ENCODE measurements at regions of chr16 and their contacts with region 1.

Region 1: DNA sequence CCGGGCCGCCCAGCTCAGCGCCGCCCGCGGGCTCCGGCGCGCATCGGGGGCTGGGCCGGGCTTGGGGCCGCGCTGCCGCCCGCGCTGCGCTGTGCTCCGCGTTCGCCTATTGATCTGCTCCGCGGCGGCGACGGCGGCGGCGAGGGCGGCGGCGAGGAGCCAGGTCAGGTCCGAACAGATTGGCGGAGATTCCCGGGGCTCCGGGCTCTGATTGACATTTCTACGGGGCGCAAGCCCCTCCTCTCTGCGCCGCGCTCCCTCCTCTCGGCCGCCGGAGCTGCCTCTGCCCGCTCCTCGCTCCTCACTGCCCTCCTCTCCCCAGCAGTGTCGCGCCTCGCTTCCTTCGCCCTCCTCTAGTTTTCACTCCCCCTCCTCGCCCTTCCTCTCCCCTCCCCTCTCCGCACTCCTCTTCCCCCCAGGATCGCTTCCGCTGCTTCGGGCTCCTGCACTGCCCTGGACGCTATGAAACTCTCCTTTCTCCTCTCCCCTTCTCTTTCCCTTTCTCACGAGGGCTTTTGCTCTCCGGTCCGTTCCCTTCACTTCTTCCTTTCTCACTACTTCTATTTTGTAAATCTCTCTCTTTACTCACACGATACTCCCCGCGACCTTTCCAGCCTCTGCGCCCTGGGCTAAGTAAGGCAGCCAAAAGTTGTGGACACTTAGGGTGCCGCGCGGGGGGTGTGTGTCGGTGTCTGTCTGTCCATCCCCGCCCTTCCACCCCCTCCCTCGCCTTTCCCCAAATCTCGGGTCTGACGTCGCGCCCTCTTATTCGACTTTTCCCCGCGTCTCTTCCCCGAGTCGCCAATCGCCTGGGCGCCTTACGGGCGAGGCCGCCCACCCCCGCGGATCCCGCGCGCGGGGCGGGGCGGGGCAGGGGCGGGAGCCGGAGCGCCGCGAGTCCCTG is at the start of gene IRX3:
- DNase-seq: no peak
- H3K4me3 Mint-ChIP-seq: peak within 1 kb of the TSS; percentile 75
- H3K27ac Mint-ChIP-seq: peak within 1 kb of the TSS; percentile 48
- H3K4me1 Mint-ChIP-seq: peaks cover 25% of the 10 kb centered on the region
- H3K27me3 Mint-ChIP-seq: peaks cover 67% of the 10 kb centered on the region
- total RNA-seq, gene IRX3: 0.74 and 0.96 TPM in 2 replicates

Region 2: GRCh38 chr16:52547004-52547833 is 1739.1 kb before region 1 on chr16 and contains the start of gene TOX3:
- intact Hi-C with region 1: loop called (anchors 10 kb)
- DNase-seq: no peak
- H3K4me3 Mint-ChIP-seq: no peak within 1 kb of the TSS
- H3K27ac Mint-ChIP-seq: no peak within 1 kb of the TSS
- H3K4me1 Mint-ChIP-seq: no peaks in the 10 kb centered on the region
- H3K27me3 Mint-ChIP-seq: peaks cover 31% of the 10 kb centered on the region
- total RNA-seq, gene TOX3: not detected in 2 replicates

Region 3: DNA sequence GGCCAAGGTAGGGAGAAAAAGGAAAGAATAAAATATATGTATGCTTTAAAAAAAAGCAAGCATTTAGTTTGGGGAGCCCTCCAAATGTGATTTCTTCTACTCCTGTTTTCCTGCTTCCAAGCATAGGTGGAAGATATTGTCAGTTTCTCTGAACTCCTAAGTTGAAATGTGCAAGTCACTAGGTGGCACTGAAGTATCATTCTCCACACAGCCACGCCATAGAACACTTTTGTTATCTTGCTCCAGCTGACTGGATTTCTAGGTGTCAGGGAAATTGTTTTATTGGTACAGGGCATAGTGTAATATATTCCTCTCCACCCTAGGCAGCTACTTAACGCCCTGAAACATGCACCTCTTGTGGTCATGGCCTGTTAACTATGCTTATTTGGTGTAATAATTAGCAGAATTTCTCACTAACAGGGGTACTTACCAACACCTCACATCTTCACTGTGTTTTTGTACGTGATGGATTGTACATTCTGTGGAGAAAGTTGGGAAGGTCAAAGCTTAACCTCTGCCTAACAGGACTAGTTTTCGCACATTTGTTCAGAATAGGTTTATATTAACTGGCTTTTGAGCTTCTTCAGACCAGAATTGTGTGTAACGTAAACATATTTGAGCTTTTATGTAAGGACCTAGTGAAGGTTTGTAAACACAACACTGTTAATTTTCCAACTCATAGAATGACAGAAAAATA is 513.0 kb before region 1 on chr16:
- intact Hi-C with region 1: loop called (anchors 5 kb)
- DNase-seq: no peak
- H3K4me3 Mint-ChIP-seq: no peak overlapping the region
- H3K27ac Mint-ChIP-seq: no peak overlapping the region
- H3K4me1 Mint-ChIP-seq: peaks cover 30% of the 10 kb centered on the region
- H3K27me3 Mint-ChIP-seq: no peaks in the 10 kb centered on the region

Region 4: GRCh38 chr16:53945996-53946395 is 340.3 kb before region 1 on chr16:
- intact Hi-C with region 1: loop called (anchors 10 kb)
- DNase-seq: no peak
- H3K4me3 Mint-ChIP-seq: no peak overlapping the region
- H3K27ac Mint-ChIP-seq: no peak overlapping the region
- H3K4me1 Mint-ChIP-seq: peaks cover 23% of the 10 kb centered on the region
- H3K27me3 Mint-ChIP-seq: no peaks in the 10 kb centered on the region

Region 5: DNA sequence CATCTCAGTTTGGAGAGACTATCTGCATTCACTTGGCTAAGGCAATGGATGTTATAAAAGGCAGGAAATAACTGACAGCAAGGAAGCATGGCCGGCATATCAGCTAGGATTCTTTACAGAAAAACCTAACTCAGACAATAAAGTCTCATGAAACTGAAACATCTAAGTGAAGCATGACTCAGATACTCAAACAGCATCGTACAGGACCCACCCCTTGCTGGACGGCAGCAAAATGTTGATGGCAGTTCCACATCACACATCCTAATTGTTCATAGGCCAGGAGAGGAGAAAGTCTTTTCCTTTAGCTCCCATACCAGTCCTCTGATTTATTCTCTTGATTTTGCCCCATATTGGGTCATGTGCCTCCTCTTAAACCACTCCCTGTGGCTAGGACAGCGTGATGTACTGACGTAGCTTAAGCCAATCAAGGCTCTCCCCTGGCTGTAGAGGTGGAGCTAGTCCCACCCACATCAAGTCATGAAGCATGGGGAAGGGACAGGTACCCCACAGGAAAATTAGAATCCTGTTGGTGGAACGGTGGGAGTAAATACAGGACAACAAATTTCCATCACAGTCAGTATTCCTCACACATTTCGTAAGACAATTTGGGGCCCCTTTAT is 178.6 kb before region 1 on chr16:
- intact Hi-C with region 1: no loop called
- DNase-seq: no peak
- H3K4me3 Mint-ChIP-seq: no peak overlapping the region
- H3K27ac Mint-ChIP-seq: no peak overlapping the region
- H3K4me1 Mint-ChIP-seq: no peaks in the 10 kb centered on the region
- H3K27me3 Mint-ChIP-seq: no peaks in the 10 kb centered on the region

Region 6: DNA sequence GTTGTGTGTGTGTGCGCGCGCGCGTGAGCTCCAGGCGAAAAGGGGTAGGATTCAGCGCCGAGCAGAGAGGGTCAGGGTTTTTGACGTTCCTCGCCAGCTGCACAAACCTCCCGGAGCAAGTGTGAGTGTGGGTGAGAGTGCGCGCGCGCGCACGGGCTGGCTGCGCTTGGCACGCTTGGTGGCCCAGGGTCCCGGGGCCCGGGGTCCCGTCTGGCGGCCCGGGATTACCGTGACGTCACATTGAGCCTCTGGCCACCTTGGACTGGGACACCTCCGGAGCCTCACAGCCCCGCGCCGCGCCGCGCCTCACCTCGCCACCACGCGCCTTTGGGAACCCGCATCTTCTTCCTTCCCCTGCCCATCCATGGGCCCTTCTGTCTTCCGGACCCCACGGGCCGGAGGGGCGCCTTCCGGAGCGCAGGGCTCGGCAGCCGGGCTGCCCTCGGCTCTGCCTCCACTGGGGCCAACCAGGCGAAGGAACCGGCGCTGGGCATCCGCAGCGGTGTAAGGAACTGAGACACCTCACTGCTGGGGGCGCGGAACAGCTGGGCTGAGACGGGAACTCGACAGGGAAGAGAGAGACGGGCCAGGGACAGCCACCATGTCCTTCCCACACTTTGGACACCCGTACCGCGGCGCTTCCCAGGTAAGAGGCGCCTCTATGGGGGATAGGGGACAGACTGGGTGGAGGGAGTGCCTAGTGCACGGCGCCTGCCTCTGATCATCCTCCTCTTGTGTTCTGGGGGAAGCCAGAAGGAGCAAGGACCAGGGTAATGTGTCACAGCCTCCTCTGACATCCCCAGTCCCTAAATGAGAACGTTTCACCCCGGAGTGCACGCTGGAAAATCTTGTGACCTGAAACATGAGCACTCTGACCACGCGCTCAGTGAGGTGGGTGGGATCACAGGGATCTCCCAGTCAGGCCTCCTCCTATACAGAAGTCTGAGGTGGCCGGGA is 1038.4 kb after region 1 on chr16:
- intact Hi-C with region 1: loop called (anchors 5 kb)
- DNase-seq: no peak
- H3K4me3 Mint-ChIP-seq: no peak overlapping the region
- H3K27ac Mint-ChIP-seq: no peak overlapping the region
- H3K4me1 Mint-ChIP-seq: no peaks in the 10 kb centered on the region
- H3K27me3 Mint-ChIP-seq: peaks cover 50% of the 10 kb centered on the region

Measured in activated T-helper 2 cell treated with anti-CD3 and anti-CD28 coated beads, Interferon-gamma antibody, Interleukin-2, Interleukin-4, amounts not matched to agents 10 μg/mL and 5 μg/mL and 100 μg/mL, durations not matched to agents 14 hours and 24 hours and 36 hours (primary cell).